Endothelial cell of umbilical vein (primary cell): ENCODE measurements at regions of chr12 and their contacts with region 1.

Region 1: GRCh38 chr12:614411-614970 is 48.8 kb downstream of the NINJ2 start:
- DNase-seq: peak; percentile 45
- H3K4me3 ChIP-seq: no peak overlapping the region
- H3K27ac ChIP-seq: no peak overlapping the region
- H3K4me1 ChIP-seq: peaks cover 23% of the 10 kb centered on the region
- H3K27me3 ChIP-seq: no peaks in the 10 kb centered on the region
- CTCF ChIP-seq: peak in 1 of 2 donors; percentile 48
- POLR2A ChIP-seq: no peak

Region 2: DNA sequence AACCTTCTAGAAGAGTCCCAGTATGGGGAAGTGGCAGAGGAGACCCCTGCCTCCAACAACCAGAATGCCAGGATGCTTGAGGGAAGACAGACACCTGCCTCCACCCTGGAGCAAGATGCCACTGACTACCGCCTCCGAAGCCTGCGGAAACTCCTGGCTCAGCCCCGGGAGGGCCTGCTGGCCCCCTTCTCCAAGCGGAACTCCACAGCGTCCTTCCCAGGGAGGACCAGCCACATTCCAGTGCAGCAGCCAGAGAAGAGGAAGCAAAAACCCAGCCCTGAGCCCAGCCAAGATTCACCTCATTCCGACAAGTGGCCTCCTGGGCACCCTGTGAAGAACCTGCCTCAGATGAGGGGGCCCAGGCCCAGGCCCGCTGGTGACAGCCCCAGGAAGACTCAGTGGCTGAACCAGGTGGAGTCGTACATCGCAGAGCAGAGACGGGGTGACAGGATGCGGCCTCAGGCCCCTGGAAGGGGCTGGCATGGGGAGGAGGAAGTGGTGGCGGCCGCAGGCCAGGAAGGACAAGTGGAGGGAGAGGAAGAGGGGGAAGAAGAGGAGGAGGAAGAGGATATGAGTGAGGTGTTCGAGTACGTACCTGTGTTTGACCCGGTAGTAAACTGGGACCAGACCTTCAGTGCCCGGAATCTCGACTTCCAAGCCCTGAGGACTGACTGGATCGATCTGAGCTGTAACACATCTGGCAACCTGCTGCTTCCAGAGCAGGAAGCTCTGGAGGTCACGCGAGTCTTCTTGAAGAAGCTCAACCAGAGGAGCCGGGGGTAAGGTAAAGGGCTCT is 61.1 kb before region 1 on chr12:
- CTCF ChIA-PET with region 1: no interaction called
- POLR2A ChIA-PET with region 1: no interaction called
- dilution Hi-C with region 1: no loop called
- intact Hi-C with region 1: no loop called
- DNase-seq: no peak
- H3K4me3 ChIP-seq: no peak overlapping the region
- H3K27ac ChIP-seq: no peak overlapping the region
- H3K4me1 ChIP-seq: no peaks in the 10 kb centered on the region
- H3K27me3 ChIP-seq: peaks cover 0 to 9% of the 10 kb centered on the region in 2 experiments
- CTCF ChIP-seq: no peak
- POLR2A ChIP-seq: no peak

Region 3: GRCh38 chr12:569803-570434 is 44.6 kb before region 1 on chr12:
- CTCF ChIA-PET with region 1: interaction called, 12 read pairs
- POLR2A ChIA-PET with region 1: no interaction called
- dilution Hi-C with region 1: no loop called
- intact Hi-C with region 1: no loop called
- DNase-seq: peak; percentile 58
- H3K4me3 ChIP-seq: peak overlapping the region; percentile 36 to 81 (median 67)
- H3K27ac ChIP-seq: peak overlapping the region; percentile 77
- H3K4me1 ChIP-seq: peaks cover 23% of the 10 kb centered on the region
- H3K27me3 ChIP-seq: peaks cover 2 to 3% of the 10 kb centered on the region in 2 experiments
- CTCF ChIP-seq: peak; percentile 79 to 97
- POLR2A ChIP-seq: no peak

Region 4: DNA sequence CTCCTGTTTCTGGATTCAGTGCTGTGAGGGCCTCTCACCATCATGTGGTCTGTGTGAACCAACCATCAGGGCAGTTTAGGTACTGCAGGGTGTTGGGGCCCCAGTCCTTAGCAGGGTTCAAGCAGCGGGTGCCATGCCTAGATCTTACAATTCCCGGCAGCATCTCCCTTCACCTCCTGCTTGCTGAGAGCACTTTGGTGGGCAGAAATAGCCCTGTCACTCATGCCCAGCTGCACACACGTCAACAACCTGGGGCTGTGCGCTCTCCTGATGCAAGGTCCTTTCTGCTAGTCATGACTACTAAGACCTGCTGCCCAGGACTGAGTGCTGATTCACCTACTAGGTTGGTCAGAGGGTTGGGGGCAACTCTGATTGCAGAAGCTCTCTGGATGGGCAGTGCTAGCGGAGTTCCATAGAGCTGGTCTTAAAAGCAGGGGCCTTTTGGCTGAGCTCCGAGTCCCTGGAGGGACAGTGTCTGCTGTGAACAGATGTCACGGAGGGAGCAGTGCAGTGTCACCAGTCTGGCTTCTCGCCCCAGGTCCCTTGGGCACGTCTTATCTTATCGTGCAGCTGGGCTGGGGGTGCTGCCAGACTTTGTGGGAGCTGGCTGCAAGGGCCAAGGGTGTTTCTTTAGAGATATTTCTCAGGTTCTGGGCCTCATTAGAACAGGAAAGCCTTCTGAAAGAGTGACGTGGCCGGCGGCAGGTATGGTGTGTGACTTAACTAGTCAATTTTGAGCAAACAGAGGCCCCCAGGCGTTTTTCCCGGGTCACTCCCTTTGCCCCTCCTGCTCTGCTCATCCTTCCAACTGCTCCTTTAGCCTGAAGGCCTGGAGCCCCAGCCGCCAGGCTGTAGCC is 23.1 kb before region 1 on chr12:
- CTCF ChIA-PET with region 1: interaction called, 14 read pairs
- POLR2A ChIA-PET with region 1: no interaction called
- dilution Hi-C with region 1: no loop called
- intact Hi-C with region 1: no loop called
- DNase-seq: no peak
- H3K4me3 ChIP-seq: no peak overlapping the region
- H3K27ac ChIP-seq: no peak overlapping the region
- H3K4me1 ChIP-seq: no peaks in the 10 kb centered on the region
- H3K27me3 ChIP-seq: peaks cover 3 to 7% of the 10 kb centered on the region in 2 experiments
- CTCF ChIP-seq: no peak
- POLR2A ChIP-seq: no peak

Region 5: GRCh38 chr12:597926-598568 is 16.4 kb before region 1 on chr12:
- CTCF ChIA-PET with region 1: interaction called, 14 read pairs
- POLR2A ChIA-PET with region 1: no interaction called
- dilution Hi-C with region 1: no loop called
- intact Hi-C with region 1: no loop called
- DNase-seq: peak; percentile 91
- H3K4me3 ChIP-seq: peak overlapping the region in 1 of 3 experiments; percentile 1
- H3K27ac ChIP-seq: peak overlapping the region; percentile 63
- H3K4me1 ChIP-seq: peaks cover 13% of the 10 kb centered on the region
- H3K27me3 ChIP-seq: peaks cover 3 to 5% of the 10 kb centered on the region in 2 experiments
- CTCF ChIP-seq: no peak
- POLR2A ChIP-seq: no peak

Region 6: DNA sequence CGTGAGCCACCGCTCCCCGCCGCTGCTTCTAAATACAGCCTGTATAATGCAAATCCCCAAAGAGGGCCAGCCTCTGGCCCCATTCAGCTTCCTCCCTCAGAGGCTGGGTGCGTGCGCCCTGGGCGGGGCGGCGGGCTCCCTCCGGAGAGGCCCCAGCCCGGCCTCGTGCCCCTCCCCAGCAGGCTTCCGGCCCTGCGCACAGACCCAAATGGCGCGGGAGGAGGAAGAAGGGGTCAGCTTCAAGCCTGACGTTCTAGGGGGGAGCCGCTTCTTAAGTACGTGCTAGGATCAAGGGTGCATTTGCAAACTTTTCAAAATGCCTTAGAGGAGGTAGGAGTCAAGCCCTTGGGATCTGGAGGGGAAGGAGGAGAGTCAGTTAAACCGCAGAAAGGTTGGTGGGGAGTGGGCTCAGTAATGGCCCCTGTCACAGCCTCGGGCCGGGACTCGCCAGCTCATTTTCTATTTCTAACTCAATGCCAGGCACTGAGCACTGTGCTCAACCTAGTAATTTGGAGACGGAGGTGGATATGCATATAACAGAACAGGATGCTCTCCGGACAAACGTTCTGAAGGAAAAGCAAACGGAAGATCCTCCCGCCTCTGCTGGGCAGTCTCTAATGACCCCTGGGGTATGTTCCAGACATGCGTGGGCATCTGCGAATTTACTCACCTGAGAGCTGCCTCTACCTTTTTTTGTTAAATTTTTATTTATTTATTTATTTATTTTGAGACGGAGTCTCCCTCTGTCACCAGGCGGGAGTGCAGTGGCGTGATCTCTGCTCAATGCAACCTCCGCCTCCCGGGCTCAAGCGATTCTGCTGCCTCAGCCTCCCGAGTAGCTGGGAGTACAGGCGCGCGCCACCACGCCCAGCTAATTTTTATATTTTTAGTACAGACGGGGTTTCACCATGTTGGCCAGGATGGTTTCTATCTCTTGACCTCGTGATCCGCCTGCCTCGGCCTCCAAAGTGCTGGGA is 16.5 kb after region 1 on chr12:
- CTCF ChIA-PET with region 1: interaction called, 17 read pairs
- POLR2A ChIA-PET with region 1: no interaction called
- dilution Hi-C with region 1: no loop called
- intact Hi-C with region 1: no loop called
- DNase-seq: peak; percentile 28
- H3K4me3 ChIP-seq: no peak overlapping the region
- H3K27ac ChIP-seq: peak overlapping the region; percentile 89
- H3K4me1 ChIP-seq: peaks cover 28% of the 10 kb centered on the region
- H3K27me3 ChIP-seq: no peaks in the 10 kb centered on the region
- CTCF ChIP-seq: no peak
- POLR2A ChIP-seq: no peak

Region 7: GRCh38 chr12:810671-811415 is 196.4 kb after region 1 on chr12:
- CTCF ChIA-PET with region 1: interaction called, 8 read pairs
- POLR2A ChIA-PET with region 1: no interaction called
- dilution Hi-C with region 1: no loop called
- intact Hi-C with region 1: loop called (anchors 2 kb)
- DNase-seq: no peak
- H3K4me3 ChIP-seq: no peak overlapping the region
- H3K27ac ChIP-seq: no peak overlapping the region
- H3K4me1 ChIP-seq: peaks cover 13% of the 10 kb centered on the region
- H3K27me3 ChIP-seq: no peaks in the 10 kb centered on the region
- CTCF ChIP-seq: no peak
- POLR2A ChIP-seq: no peak